ENCODE measurements at regions of chr11 and their contacts with region 1.

Region 1: GRCh38 chr11:62665075-62665598 is at the starts of genes C11orf98 and CSKMT:
- DNase-seq: peak; percentile 89 to 97 (median 94)
- H3K4me3 ChIP-seq: peak within 1 kb of the TSS; percentile 98
- H3K4me3 Mint-ChIP-seq: peak within 1 kb of the TSS; percentile 96 to 100 (median 97)
- H3K27ac ChIP-seq: peak within 1 kb of the TSS; percentile 89
- H3K27ac Mint-ChIP-seq: peak within 1 kb of the TSS; percentile 94 to 99 (median 96)
- H3K4me1 ChIP-seq: peaks cover 24% of the 10 kb centered on the region
- H3K4me1 Mint-ChIP-seq: peaks cover 33 to 53% (median 33%) of the 10 kb centered on the region in 3 donors
- H3K27me3 ChIP-seq: no peaks in the 10 kb centered on the region
- H3K27me3 Mint-ChIP-seq: peaks cover 0 to 4% of the 10 kb centered on the region in 2 donors
- total RNA-seq, gene C11orf98: 178 to 182 TPM
- total RNA-seq, gene CSKMT: 43.1 to 48.3 TPM

Region 2: DNA sequence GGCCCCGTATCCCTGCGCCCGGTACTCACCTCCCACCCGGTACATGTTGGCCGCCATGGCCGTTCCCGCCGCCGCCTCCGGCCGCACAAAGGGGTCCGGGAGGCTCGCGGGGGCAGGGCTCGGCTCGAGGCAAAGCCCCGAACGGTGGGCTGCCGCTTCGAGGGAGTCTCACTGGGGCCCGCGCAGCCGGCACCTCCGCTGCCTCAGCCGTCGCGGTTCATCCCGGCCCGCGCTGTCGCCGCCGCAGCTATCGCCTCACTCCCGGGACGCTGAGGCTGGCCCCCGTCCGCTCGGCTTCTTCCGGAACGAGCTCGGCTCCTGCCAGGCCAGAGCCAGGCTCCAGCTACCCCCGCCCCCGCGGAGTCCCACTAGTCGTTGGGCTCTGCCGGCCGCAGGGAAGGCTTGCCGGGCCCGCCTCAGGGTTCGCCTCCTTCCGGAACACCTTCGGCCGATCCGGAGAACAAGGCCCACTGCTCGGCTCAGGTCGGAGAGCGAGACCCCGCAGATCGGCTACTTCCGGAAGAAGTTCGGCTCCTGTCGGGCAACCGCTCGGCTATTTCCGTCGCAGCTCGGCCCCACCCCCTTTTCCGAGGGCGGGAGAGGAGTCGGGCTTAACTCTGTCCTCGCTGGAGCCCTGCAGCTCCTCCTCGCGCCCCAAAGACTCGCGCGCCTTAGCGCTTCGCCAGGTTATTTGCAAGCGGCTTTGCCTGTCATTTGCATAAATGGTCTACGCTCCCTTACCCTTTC is 63.6 kb before region 1 on chr11 and contains the start of gene MTA2:
- CTCF ChIA-PET with region 1: interaction called, 3 read pairs
- POLR2A ChIA-PET with region 1: interaction called, 12 read pairs
- DNase-seq: peak; percentile 98 to 100 (median 99)
- H3K4me3 ChIP-seq: peak within 1 kb of the TSS; percentile 89
- H3K4me3 Mint-ChIP-seq: peak within 1 kb of the TSS; percentile 91 to 97 (median 93)
- H3K27ac ChIP-seq: peak within 1 kb of the TSS; percentile 86
- H3K27ac Mint-ChIP-seq: peak within 1 kb of the TSS; percentile 93 to 98 (median 96)
- H3K4me1 ChIP-seq: peaks cover 29% of the 10 kb centered on the region
- H3K4me1 Mint-ChIP-seq: peaks cover 49 to 69% (median 52%) of the 10 kb centered on the region in 3 donors
- H3K27me3 ChIP-seq: no peaks in the 10 kb centered on the region
- H3K27me3 Mint-ChIP-seq: peaks cover 0 to 5% of the 10 kb centered on the region in 2 donors
- total RNA-seq, gene MTA2: 248 to 263 TPM

Region 3: GRCh38 chr11:62645956-62646824 is 18.9 kb before region 1 on chr11 and contains the start of gene GANAB:
- CTCF ChIA-PET with region 1: interaction called, 9 read pairs
- POLR2A ChIA-PET with region 1: interaction called, 15 read pairs
- DNase-seq: peak; percentile 96 to 99 (median 98)
- H3K4me3 ChIP-seq: peak within 1 kb of the TSS; percentile 75
- H3K4me3 Mint-ChIP-seq: peak within 1 kb of the TSS; percentile 89 to 97 (median 96)
- H3K27ac ChIP-seq: peak within 1 kb of the TSS; percentile 77
- H3K27ac Mint-ChIP-seq: peak within 1 kb of the TSS; percentile 88 to 99 (median 98)
- H3K4me1 ChIP-seq: peaks cover 24% of the 10 kb centered on the region
- H3K4me1 Mint-ChIP-seq: peaks cover 19 to 40% (median 25%) of the 10 kb centered on the region in 3 donors
- H3K27me3 ChIP-seq: no peaks in the 10 kb centered on the region
- H3K27me3 Mint-ChIP-seq: no peaks in the 10 kb centered on the region
- total RNA-seq, gene GANAB: 213 to 219 TPM

Region 4: GRCh38 chr11:62694455-62695167 is 29.5 kb after region 1 on chr11:
- CTCF ChIA-PET with region 1: interaction called, 11 read pairs
- POLR2A ChIA-PET with region 1: interaction called, 6 read pairs
- DNase-seq: peak; percentile 68 to 84 (median 72)
- H3K4me3 ChIP-seq: no peak overlapping the region
- H3K4me3 Mint-ChIP-seq: no peak overlapping the region
- H3K27ac ChIP-seq: no peak overlapping the region
- H3K27ac Mint-ChIP-seq: peak overlapping the region in 5 of 8 donors; percentile 5 to 81 (median 48)
- H3K4me1 ChIP-seq: peaks cover 7% of the 10 kb centered on the region
- H3K4me1 Mint-ChIP-seq: peaks cover 5 to 8% (median 6%) of the 10 kb centered on the region in 3 donors
- H3K27me3 ChIP-seq: no peaks in the 10 kb centered on the region
- H3K27me3 Mint-ChIP-seq: peaks cover 0 to 2% of the 10 kb centered on the region in 2 donors

Region 5: GRCh38 chr11:62753736-62754603 is 88.8 kb after region 1 on chr11 and contains the start of gene ZBTB3:
- CTCF ChIA-PET with region 1: no interaction called
- POLR2A ChIA-PET with region 1: interaction called, 10 read pairs
- DNase-seq: peak; percentile 95 to 99 (median 98)
- H3K4me3 ChIP-seq: peak within 1 kb of the TSS; percentile 99
- H3K4me3 Mint-ChIP-seq: peak within 1 kb of the TSS; percentile 91 to 100 (median 99)
- H3K27ac ChIP-seq: peak within 1 kb of the TSS; percentile 91
- H3K27ac Mint-ChIP-seq: peak within 1 kb of the TSS; percentile 83 to 99 (median 98)
- H3K4me1 ChIP-seq: peaks cover 22% of the 10 kb centered on the region
- H3K4me1 Mint-ChIP-seq: peaks cover 24 to 40% (median 33%) of the 10 kb centered on the region in 3 donors
- H3K27me3 ChIP-seq: no peaks in the 10 kb centered on the region
- H3K27me3 Mint-ChIP-seq: no peaks in the 10 kb centered on the region
- total RNA-seq, gene ZBTB3: 9.4 to 11.6 TPM

Measured in CD8-positive, alpha-beta memory T cell (primary cell).